Psoas muscle (tissue), 8 donors: ENCODE measurements at regions of chr20 and their contacts with region 1.

Region 1: DNA sequence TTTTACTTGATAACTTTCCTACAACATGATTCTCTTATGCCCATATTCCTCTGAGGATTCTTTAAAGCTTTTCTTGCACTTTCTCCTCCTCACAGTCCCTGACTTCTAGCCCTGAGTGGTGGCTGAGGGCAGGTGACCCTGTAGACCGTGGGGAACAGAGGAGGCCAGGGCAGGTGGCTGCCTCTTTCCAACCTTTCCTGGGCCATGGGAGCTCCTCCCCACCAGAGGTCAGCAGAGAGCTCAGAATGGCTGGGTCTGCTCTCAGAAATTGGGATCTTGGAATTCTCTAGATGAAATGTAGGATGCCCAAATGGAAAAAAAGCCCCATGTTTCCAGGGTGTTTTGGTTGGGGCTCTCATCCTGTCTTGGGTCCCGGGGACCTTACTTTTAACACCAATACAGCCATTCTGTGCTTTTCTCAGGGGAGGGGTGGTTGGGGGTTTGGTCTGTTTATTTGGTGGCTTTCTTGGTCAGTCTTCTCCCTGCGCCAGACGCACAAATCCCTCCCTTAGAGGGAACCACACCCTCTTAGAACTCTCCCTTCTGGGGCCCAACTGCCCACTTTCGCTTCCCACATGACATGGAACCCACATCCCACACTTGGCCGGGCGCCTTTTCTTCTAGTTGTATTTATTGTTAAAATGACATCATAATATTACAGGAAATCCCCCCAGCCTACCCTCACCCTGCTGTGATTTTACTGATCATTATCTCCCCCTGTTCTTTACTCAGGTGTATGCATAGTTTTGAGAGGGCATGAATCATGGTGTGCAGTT is 17.9 kb downstream of the GNAS start:
- DNase-seq: peak; percentile 56 to 81
- ATAC-seq: peak; percentile 86 to 92 (median 88)
- H3K4me3 ChIP-seq: no peak overlapping the region
- H3K27ac ChIP-seq: no peak overlapping the region
- H3K4me1 ChIP-seq: no peaks in the 10 kb centered on the region
- H3K27me3 ChIP-seq: no peaks in the 10 kb centered on the region
- CTCF ChIP-seq: peak; percentile 91

Region 2: DNA sequence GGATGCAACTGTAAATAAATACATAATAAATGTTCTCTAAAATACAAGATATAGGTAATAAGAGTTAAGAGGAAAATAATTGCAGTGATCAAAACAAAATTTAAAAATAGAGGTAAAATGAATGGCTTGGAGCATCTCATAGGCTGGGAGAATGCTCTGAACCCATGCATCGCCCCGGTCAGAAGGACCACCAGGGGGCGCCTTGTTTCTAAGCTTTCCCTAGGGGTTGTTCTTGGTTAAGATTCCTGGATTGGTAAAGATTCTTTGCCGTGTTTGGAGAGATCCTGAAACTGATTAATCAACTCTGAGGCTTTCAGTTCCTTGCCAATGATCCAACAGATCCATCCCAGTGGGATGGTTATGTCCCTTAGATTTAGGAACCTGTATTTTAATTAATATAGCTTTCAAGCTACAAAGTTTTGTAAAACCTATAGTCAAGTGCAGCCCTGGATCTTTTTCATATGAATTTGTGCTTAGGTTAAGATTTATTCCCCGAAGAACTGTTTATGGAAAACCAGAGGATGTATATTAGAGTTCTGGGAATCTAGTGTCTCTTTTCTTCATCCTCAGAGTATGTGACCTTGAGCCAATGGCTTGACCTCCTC is 217.5 kb after region 1 on chr20:
- intact Hi-C with region 1: loop called (anchors 2 to 10 kb)
- DNase-seq: peak; percentile 81 to 89
- ATAC-seq: peak; percentile 70 to 87 (median 75)
- H3K4me3 ChIP-seq: no peak overlapping the region
- H3K27ac ChIP-seq: no peak overlapping the region
- H3K4me1 ChIP-seq: no peaks in the 10 kb centered on the region
- H3K27me3 ChIP-seq: peaks cover 0 to 5% (median 0%) of the 10 kb centered on the region in 3 donors
- CTCF ChIP-seq: peak; percentile 92

Region 3: GRCh38 chr20:59207742-59208357 is 337.4 kb after region 1 on chr20:
- intact Hi-C with region 1: loop called (anchors 5 kb)
- DNase-seq: peak in 1 of 2 donors; percentile 67
- ATAC-seq: peak; percentile 54 to 82 (median 80)
- H3K4me3 ChIP-seq: no peak overlapping the region
- H3K27ac ChIP-seq: no peak overlapping the region
- H3K4me1 ChIP-seq: no peaks in the 10 kb centered on the region
- H3K27me3 ChIP-seq: no peaks in the 10 kb centered on the region
- CTCF ChIP-seq: peak; percentile 58

Region 4: GRCh38 chr20:59222253-59223181 is 352.1 kb after region 1 on chr20:
- intact Hi-C with region 1: loop called (anchors 1 to 2 kb)
- DNase-seq: peak; percentile 81 to 86
- ATAC-seq: peak; percentile 87 to 99 (median 94)
- H3K4me3 ChIP-seq: peak overlapping the region; percentile 75
- H3K27ac ChIP-seq: no peak overlapping the region
- H3K4me1 ChIP-seq: peaks cover 12% of the 10 kb centered on the region
- H3K27me3 ChIP-seq: peaks cover 0 to 28% (median 3%) of the 10 kb centered on the region in 3 donors
- CTCF ChIP-seq: peak; percentile 91

Region 5: DNA sequence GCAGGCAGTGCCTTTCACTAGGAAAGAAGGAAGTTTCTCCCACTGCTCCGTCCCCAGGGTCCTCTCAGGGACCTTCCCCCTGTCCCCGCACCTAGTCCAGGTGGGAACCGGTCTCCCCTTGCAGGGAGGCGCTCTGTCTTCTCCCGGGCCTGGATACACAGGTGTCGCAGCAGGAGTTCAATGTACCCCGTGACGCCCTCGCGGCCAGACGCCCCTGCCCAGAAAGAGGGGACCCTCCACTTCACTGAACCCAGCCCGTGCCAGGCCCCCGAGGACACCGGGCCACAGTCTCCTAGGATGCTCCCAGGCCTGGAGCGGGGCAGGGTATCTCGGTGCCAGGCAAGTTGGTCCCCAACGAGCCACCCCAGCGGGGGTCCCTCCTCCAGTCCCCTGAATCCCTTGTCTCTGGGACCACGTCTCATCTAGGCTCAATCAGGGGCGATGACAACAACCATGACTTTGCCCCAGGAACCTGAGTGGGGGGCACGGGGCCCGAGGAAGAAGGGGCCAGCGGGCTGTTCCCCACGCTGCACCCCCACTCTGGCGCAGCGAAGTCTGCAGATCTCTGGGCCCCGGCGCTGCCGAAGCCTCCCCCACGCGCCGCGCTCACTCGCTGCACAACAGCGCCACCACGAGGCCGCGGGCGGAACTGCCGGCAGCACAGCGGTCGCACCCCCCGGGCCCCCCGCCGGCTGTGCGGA is 533.0 kb after region 1 on chr20:
- intact Hi-C with region 1: loop called (anchors 5 to 10 kb)
- DNase-seq: peak; percentile 45 to 69
- ATAC-seq: peak; percentile 50 to 75 (median 61)
- H3K4me3 ChIP-seq: peak overlapping the region; percentile 15
- H3K27ac ChIP-seq: no peak overlapping the region
- H3K4me1 ChIP-seq: no peaks in the 10 kb centered on the region
- H3K27me3 ChIP-seq: peaks cover 0 to 85% (median 25%) of the 10 kb centered on the region in 3 donors
- CTCF ChIP-seq: peak; percentile 83

Region 6: GRCh38 chr20:59495894-59496510 is 625.6 kb after region 1 on chr20:
- intact Hi-C with region 1: loop called in 1 of 2 experiments (anchors 5 kb)
- DNase-seq: peak; percentile 69 to 78
- ATAC-seq: peak in 3 of 4 donors; percentile 30 to 67 (median 49)
- H3K4me3 ChIP-seq: no peak overlapping the region
- H3K27ac ChIP-seq: no peak overlapping the region
- H3K4me1 ChIP-seq: no peaks in the 10 kb centered on the region
- H3K27me3 ChIP-seq: peaks cover 0 to 7% (median 5%) of the 10 kb centered on the region in 3 donors
- CTCF ChIP-seq: peak; percentile 75